Activated T-helper 1 cell treated with anti-CD3 and anti-CD28 coated beads, Interleukin-12 subunit alpha, Interleukin-12 subunit beta, Interleukin-2, Interleukin-4 antibody, amounts not matched to agents 30 ng/mL and 10 ng/mL and 1 ng/mL, durations not matched to agents 14 hours and 24 hours and 36 hours (primary cell): ENCODE measurements at regions of chr12 and their contacts with region 1.

Region 1: DNA sequence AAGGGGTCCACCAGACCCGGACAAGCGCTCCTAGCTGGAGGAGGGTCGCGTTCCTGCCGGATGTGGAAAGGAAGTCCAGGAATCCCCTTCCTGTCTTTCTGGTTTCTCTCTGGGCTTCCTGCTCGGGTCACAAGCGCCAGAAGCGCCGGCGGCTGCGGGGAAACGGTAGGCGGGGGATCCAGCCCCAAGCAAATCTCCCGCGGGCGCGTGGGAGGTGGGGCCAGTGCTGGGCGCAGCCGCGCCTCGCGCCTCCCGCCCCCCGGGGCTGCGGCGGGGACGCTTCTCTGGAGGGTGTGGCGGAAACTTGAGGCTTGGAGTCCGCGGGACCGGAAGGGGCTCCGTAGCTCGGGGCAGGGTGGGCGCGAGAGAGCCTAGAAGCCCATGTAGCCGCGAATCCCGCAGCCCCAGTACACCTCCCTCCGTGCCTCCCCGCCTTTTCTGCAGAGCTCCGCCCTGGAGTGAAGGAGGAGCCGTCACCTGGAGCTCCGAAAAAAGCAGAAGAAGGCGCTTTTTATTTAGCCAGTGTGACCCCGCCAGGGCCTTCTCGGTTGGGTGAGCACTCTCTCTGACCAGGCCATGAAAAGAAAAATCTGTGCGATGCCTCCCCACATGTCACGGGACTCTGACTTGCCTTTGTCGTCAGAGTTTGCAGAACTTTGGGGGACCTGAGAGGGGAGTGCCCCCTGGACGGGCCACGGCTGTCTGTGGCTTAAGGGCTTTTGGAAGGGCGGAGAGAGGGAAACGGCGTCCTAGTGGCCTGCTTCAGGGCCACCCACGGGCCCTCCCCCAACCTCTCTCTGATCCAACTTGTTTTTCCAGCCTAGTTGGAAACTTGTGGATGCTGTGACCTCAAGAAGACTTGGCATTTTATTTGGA is 21.4 kb upstream of the CLEC2D start:
- DNase-seq: peak; percentile 93
- H3K4me3 Mint-ChIP-seq: peak overlapping the region; percentile 93
- H3K27ac Mint-ChIP-seq: peak overlapping the region; percentile 97
- H3K4me1 Mint-ChIP-seq: peaks cover 75% of the 10 kb centered on the region
- H3K27me3 Mint-ChIP-seq: peaks cover 3% of the 10 kb centered on the region

Region 2: DNA sequence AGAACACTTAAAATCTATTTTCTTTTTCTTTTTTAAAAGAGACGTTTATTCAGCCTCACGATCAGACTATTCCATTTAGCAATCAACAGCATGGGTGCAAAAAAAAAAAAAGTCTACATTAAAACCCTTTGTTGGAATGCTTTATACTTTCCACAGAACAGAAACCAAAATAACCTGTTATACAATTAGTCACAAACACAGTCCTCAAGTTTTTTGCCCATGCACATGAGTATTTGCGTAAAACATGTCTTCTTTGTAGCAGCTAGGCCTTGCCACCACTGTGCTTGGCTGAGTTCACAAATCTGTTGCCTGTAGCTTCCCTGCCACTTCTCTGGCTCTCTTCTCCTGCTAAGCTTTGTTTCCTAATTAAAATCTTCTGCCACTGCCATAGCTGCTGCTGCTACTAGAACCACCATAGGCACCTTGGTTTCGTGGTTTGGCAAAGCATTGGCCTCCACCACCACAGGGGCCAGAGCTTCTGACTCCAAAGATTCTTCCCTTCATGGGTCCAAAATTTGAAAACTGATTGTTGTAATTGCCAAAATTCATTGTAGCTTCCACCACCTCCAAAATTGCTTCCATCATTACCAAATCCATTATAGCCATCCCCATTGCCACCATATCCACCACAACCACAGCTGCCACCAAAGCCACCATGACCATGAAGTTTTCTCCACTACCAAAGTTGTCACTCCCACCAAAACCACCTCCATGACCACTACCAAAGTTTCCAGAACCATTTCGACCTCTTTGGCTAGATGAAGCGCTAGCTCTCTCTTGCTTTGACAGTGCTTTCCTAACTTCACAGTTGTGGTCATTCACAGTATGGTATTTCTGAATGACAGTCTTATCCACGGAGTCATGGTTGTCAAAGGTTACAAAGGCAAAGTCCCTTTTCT is 620.7 kb before region 1 on chr12:
- intact Hi-C with region 1: loop called (anchors 10 kb)
- DNase-seq: no peak
- H3K4me3 Mint-ChIP-seq: peak overlapping the region; percentile 9
- H3K27ac Mint-ChIP-seq: peak overlapping the region; percentile 88
- H3K4me1 Mint-ChIP-seq: peaks cover 9% of the 10 kb centered on the region
- H3K27me3 Mint-ChIP-seq: no peaks in the 10 kb centered on the region

Region 3: DNA sequence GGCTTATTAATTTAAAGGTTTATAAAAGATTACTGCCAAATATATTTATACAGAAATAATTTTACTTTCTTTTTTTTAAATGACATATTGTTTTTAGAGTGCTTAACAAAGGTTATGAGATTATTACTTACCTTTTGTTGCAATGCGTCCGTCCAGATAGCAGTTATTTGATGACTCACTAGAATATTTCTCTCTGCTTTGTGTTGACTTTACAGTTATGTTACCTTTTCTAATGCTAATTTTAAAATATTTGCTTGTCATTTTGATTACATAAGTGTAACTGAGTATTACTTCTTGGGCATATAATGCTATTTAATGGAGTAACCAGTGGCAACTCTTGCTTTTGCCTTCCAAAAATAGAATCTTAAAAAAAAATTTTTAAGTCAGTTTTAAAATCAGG is 433.5 kb before region 1 on chr12:
- intact Hi-C with region 1: no loop called
- DNase-seq: no peak
- H3K4me3 Mint-ChIP-seq: no peak overlapping the region
- H3K27ac Mint-ChIP-seq: no peak overlapping the region
- H3K4me1 Mint-ChIP-seq: no peaks in the 10 kb centered on the region
- H3K27me3 Mint-ChIP-seq: no peaks in the 10 kb centered on the region

Region 4: GRCh38 chr12:9634177-9634803 is 13.8 kb before region 1 on chr12:
- intact Hi-C with region 1: loop called (anchors 1 kb)
- DNase-seq: peak; percentile 64
- H3K4me3 Mint-ChIP-seq: peak overlapping the region; percentile 60
- H3K27ac Mint-ChIP-seq: peak overlapping the region; percentile 63
- H3K4me1 Mint-ChIP-seq: peaks cover 60% of the 10 kb centered on the region
- H3K27me3 Mint-ChIP-seq: peaks cover 3% of the 10 kb centered on the region

Region 5: DNA sequence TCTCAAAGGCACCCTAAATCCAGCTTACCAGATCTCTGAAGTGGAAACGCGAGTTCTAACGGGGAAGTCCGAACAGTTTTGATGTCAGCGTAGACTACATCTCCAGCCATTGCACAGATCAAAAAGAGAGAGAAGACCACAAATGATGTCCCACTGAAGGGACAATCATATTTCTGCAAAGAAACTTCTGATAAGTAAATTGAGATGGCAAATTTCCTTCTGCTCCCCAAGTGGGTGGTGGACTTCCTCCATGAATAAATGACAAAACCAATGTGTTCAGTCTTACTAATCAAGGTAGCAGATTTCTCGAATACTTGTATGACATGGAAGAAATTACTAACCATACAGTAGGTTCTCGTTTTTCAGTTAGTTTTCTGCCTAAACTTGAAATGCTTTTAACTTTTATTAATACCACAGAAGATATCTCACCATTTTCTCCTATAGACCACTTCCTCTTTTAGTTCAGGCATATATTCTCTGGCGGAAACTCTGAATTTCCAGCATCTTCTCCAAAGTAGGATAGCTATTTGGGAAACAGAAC is 84.9 kb after region 1 on chr12 and contains the start of gene CLECL1:
- intact Hi-C with region 1: loop called (anchors 2 kb)
- DNase-seq: no peak
- H3K4me3 Mint-ChIP-seq: peak within 1 kb of the TSS; percentile 87
- H3K27ac Mint-ChIP-seq: peak within 1 kb of the TSS; percentile 89
- H3K4me1 Mint-ChIP-seq: peaks cover 76% of the 10 kb centered on the region
- H3K27me3 Mint-ChIP-seq: no peaks in the 10 kb centered on the region
- total RNA-seq, gene CLECL1: 7.6 and 9.1 TPM in 2 replicates

Region 6: GRCh38 chr12:9797722-9798619 is 149.9 kb after region 1 on chr12:
- intact Hi-C with region 1: loop called (anchors 1 kb)
- DNase-seq: peak; percentile 73
- H3K4me3 Mint-ChIP-seq: peak overlapping the region; percentile 46
- H3K27ac Mint-ChIP-seq: peak overlapping the region; percentile 41
- H3K4me1 Mint-ChIP-seq: peaks cover 49% of the 10 kb centered on the region
- H3K27me3 Mint-ChIP-seq: peaks cover 5% of the 10 kb centered on the region

Region 7: DNA sequence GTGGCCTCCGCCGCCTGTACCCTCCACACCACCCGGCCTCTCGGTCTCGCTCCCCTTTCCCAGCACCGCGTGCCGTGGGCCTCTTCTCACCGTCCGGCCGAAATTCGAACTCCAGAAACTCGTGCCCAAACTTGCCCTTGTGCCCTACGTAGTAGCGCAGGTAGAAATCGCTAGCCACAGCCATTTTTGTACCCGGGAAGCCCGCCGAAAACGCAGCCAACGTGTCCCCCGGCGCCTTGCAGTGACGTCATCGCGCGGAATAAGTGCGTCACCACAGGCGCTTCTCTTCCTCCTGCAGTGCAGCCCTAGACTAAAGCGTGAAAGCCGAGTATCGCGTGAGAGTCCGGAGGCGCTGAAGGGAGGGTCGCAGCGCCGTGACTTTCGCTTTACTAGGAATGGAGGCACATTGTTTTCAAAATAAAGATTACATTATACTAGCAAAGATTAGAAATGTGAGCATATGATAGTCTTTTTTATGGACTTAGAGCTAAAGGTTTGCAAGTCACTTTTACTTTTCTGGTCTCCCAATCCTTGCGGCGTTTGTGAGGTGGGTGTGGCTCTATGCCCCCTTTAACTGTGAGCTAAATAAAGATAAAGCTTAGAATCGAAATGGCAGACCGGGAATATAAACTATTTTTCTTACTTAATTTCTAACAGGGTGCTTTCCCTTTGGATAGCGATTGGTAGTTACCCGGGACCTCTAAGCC is 965.4 kb after region 1 on chr12 and contains the start of gene MAGOHB:
- intact Hi-C with region 1: loop called (anchors 10 kb)
- DNase-seq: peak; percentile 97
- H3K4me3 Mint-ChIP-seq: peak within 1 kb of the TSS; percentile 97
- H3K27ac Mint-ChIP-seq: peak within 1 kb of the TSS; percentile 99
- H3K4me1 Mint-ChIP-seq: peaks cover 36% of the 10 kb centered on the region
- H3K27me3 Mint-ChIP-seq: peaks cover 16% of the 10 kb centered on the region
- total RNA-seq, gene MAGOHB: 79.4 and 85.1 TPM in 2 replicates